ENCODE measurements at regions of chr6 and their contacts with region 1.

Region 1: GRCh38 chr6:37222125-37222967 is 35.2 kb upstream of the TBC1D22B start:
- DNase-seq: peak; percentile 83
- ATAC-seq: peak; percentile 96
- H3K4me3 ChIP-seq: peak overlapping the region; percentile 65
- H3K27ac ChIP-seq: 0 out of 2 replicates have a peak overlapping the region, but pooled peaks have one; percentile 1
- H3K4me1 ChIP-seq: 0 out of 2 replicates have a peak, but pooled peaks cover 2% of the 10 kb centered on the region
- H3K27me3 ChIP-seq: no peaks in the 10 kb centered on the region
- CTCF ChIP-seq: 0 out of 2 replicates have a peak, but pooled peaks have one; percentile 1
- POLR2A ChIP-seq: no peak
- RAD21 ChIP-seq: no peak

Region 2: GRCh38 chr6:37239950-37240713 is 17.8 kb after region 1 on chr6:
- CTCF ChIA-PET with region 1: interaction called, 3 read pairs
- POLR2A ChIA-PET with region 1: interaction called, 15 read pairs
- dilution Hi-C with region 1: no loop called
- in situ Hi-C with region 1: no loop called
- intact Hi-C with region 1: no loop called
- DNase-seq: peak; percentile 99
- ATAC-seq: peak; percentile 33
- H3K4me3 ChIP-seq: no peak overlapping the region
- H3K27ac ChIP-seq: peak overlapping the region; percentile 69
- H3K4me1 ChIP-seq: peaks cover 30% of the 10 kb centered on the region
- H3K27me3 ChIP-seq: no peaks in the 10 kb centered on the region
- CTCF ChIP-seq: no peak
- POLR2A ChIP-seq: peak; percentile 92
- RAD21 ChIP-seq: peak; percentile 1; the same call in 1 of the 2 replicates